Sigmoid colon (tissue), 7 donors: ENCODE measurements at regions of chr17 and their contacts with region 1.

Region 1: GRCh38 chr17:75319904-75320691 is 30.9 kb upstream of the SLC25A19 start:
- DNase-seq: no peak
- H3K4me3 ChIP-seq: no peak overlapping the region
- H3K27ac ChIP-seq: peak overlapping the region in 3 of 4 donors; percentile 12 to 62 (median 19)
- H3K4me1 ChIP-seq: peaks cover 0 to 25% (median 12%) of the 10 kb centered on the region in 4 donors
- H3K27me3 ChIP-seq: no peaks in the 10 kb centered on the region
- CTCF ChIP-seq: no peak
- EP300 ChIP-seq: no peak
- POLR2A ChIP-seq: no peak

Region 2: DNA sequence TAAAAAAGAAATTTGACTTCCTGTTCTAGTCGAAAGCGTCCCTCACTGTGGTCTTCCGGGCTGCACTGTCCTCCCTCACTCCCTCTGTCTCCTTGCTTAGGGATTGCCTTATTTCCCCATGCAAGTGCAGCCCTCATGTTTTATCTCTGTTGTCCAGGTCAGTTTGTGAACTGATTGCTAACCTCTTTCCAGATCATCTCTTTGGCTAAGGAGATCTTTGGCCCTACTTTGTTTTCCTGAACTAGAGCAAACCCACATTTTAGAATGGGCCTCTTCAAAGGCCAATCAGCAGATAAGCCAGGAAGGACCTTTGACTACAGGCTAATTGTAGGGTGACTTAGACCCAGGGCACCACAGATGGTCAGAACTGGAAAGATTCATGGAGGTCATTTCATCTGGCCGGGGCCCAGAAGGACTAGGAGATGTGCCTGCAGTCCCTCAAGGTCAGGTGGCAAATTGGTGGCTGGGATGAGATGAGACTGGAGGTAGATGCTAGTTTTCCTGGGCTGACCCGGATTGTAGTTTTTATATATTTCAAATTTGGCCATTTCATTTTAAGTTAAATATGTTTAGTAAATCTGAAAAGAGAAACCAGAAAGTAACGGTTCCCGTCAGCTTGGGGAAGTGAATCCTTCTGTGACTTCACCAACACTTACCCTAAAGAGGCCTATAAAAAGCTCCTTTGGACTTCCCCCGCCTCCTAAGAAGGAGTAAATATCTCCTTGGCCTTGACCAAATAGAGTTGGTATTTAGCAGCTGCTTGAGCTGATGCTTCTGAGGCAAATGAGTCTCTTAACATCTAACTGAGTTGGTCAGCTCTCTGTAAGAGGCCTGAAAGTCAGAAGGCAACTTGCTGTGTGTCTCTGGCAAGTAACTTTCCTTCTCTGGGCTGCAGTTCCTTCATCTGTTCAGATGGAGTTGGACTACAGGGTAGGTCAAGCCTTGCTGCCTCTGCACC is 24.6 kb before region 1 on chr17:
- intact Hi-C with region 1: no loop called
- DNase-seq: no peak
- H3K4me3 ChIP-seq: no peak overlapping the region
- H3K27ac ChIP-seq: peak overlapping the region; percentile 31 to 64 (median 49)
- H3K4me1 ChIP-seq: peaks cover 0 to 1% (median 0%) of the 10 kb centered on the region in 4 donors
- H3K27me3 ChIP-seq: no peaks in the 10 kb centered on the region
- CTCF ChIP-seq: no peak
- EP300 ChIP-seq: no peak
- POLR2A ChIP-seq: no peak

Region 3: DNA sequence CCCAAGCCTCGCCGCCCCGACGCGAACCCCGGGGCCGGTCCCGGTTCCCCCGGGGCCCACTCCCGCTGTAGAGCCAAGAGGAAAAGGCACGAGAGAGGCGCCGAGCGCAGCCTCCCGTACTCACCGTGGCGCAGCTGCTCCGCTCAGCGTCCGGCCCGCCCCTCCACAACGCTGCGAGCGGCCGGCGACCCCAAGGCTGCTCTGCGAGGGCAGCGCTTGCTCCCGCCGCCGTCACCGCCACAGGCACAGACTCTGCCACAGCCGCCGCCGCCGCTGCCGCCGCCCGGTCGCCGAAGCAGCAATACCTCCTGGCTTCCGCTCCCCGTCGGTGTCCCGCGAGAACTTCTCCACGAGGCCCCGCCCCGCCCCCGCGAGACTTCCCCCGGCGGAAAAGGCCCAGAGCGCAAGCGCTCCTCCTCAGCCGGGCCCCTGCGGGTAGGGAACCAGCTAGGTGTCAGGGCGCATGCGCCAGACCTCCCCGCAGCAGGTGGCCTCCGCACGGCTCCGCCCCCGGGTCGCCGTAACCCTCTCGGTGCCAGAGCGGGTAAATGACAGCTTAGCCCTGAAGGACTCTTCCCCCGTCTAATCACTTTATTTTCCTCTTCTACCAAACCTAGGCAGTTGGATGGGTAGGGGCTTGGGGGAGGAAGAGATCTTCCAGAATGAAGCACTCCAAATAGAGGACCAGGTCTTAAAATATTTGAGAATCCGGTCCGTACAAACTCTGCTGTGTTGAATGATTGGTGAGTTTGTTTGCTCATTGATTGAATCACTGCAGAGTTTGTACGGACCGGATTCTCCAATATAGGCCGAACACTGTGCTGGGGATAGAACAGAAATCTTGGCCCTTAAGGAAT is 85.5 kb after region 1 on chr17 and contains the start of gene GRB2:
- intact Hi-C with region 1: loop called (anchors 2 kb)
- DNase-seq: peak; percentile 99
- H3K4me3 ChIP-seq: peak within 1 kb of the TSS; percentile 92 to 100 (median 96)
- H3K27ac ChIP-seq: peak within 1 kb of the TSS; percentile 92 to 97 (median 97)
- H3K4me1 ChIP-seq: peaks cover 0 to 38% (median 22%) of the 10 kb centered on the region in 4 donors
- H3K27me3 ChIP-seq: no peaks in the 10 kb centered on the region
- CTCF ChIP-seq: no peak
- EP300 ChIP-seq: peak in 1 of 4 donors; percentile 57
- POLR2A ChIP-seq: peak; percentile 75 to 78
- total RNA-seq, gene GRB2: 75.3 to 103 (median 84.4) TPM

Region 4: GRCh38 chr17:75412455-75413317 is 92.6 kb after region 1 on chr17:
- intact Hi-C with region 1: loop called (anchors 1 kb)
- DNase-seq: peak; percentile 74
- H3K4me3 ChIP-seq: peak overlapping the region in 3 of 4 donors; percentile 8 to 29 (median 28)
- H3K27ac ChIP-seq: peak overlapping the region in 1 of 4 donors; percentile 42
- H3K4me1 ChIP-seq: peaks cover 0 to 8% (median 2%) of the 10 kb centered on the region in 4 donors
- H3K27me3 ChIP-seq: no peaks in the 10 kb centered on the region
- CTCF ChIP-seq: peak; percentile 63 to 85 (median 80)
- EP300 ChIP-seq: no peak
- POLR2A ChIP-seq: no peak